BJ (cell line): ENCODE measurements at regions of chr10 and their contacts with region 1.

Region 1: DNA sequence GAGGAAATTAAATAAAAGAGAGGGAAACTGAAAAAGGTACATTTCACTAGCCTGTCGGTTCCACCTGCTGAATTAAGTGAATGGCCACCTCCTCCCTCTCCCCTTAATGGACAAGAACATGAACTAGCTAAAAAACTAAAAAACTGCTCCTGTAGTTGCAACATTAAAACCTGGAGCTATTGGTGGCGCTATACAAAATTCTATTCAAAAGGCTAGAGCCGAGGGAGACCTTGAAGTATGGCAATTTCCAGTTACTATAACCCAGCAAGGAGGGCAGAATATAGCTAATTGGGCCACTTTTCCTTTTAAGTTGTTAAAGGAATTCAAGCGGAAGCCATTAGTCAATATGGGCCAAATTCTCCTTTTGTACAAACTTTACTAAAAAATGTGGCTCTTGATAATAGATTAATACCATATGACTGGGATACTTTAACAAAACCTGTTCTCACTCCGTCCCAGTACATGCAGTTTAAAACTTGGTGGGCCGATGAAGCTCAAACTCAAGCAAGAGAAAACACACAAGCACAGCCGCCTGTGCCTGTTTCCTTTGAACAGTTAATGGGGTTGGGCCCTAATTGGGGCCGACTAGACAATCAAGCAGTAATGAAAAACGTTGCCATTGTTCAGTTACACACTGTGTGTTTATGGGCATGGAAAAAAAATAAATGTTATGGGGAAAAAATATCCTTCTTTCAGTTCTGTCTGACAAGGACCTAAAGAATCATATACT is 6.5 kb upstream of the CHST3 start:
- DNase-seq: no peak
- H3K4me3 ChIP-seq: no peak overlapping the region
- H3K27me3 ChIP-seq: no peaks in the 10 kb centered on the region
- CTCF ChIP-seq: peak; percentile 40

Region 2: DNA sequence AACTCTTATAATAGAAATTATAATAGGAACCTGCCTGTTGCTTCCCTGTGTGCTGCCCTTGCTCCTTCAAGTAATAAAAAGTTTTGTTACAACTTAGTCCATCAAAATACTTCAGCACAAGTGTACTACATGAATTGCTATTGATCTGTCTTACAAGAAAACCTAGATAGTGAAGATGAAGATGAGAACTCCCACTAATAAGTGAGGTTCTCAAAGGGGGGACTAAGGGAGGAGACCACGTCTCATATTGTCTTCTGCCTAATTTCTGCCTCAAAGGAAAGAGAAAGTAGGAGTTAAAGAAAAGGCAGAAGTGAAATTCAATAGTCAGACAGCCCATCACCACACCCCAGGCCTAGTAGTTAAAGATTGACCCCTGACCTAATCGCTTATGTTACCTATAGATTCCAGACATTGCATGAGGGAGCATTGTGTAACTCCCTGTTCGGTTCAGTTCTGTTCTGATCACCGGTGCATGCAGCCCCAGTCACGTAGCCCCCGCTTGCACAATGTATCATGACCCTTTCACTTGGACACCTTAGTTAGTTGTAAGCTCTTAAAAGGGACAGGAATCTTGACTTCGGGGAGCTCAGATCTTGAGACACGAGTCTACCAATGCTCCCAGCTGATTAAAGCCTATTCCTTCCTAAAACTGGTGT is 11.8 kb before region 1 on chr10:
- CTCF ChIA-PET with region 1: interaction called, 14 read pairs
- POLR2A ChIA-PET with region 1: no interaction called
- DNase-seq: no peak
- H3K4me3 ChIP-seq: no peak overlapping the region
- H3K27me3 ChIP-seq: peaks cover 4% of the 10 kb centered on the region
- CTCF ChIP-seq: no peak

Region 3: GRCh38 chr10:71999360-72000072 is 41.8 kb after region 1 on chr10:
- CTCF ChIA-PET with region 1: interaction called, 11 read pairs
- POLR2A ChIA-PET with region 1: no interaction called
- DNase-seq: peak; percentile 62
- H3K4me3 ChIP-seq: no peak overlapping the region; the same call in 1 of the 2 replicates
- H3K27me3 ChIP-seq: no peaks in the 10 kb centered on the region
- CTCF ChIP-seq: no peak

Region 4: DNA sequence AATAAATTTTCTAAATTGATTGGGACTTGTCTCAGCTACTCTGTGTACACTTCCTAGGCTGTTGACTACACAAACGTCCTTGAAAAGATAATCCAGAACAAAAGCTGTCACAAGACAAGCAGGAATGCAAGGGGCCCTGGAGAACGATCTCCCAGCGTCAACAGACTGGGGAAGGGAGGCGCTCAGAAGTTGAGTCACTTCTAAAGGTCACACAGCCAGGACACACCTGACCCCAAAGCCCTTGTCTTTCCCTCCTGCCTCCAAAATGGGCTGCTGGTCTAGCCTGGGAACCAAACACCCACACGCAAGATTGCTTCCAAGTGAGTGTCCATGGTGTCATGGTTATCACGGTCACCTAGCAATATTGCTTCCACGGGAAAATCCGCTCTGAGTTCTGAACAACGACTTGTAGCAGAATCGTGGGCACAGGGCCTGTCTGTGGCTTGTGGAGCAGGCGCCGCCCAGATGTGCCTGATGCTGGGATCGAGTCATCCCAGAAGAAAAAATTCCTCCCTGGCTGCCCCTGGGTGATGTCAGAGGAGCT is 80.8 kb after region 1 on chr10:
- CTCF ChIA-PET with region 1: interaction called, 59 read pairs
- POLR2A ChIA-PET with region 1: no interaction called
- DNase-seq: peak; percentile 38
- H3K4me3 ChIP-seq: no peak overlapping the region
- H3K27me3 ChIP-seq: no peaks in the 10 kb centered on the region
- CTCF ChIP-seq: no peak

Region 5: GRCh38 chr10:72146071-72146470 is 188.4 kb after region 1 on chr10:
- CTCF ChIA-PET with region 1: no interaction called
- POLR2A ChIA-PET with region 1: no interaction called
- DNase-seq: no peak
- H3K4me3 ChIP-seq: no peak overlapping the region
- H3K27me3 ChIP-seq: no peaks in the 10 kb centered on the region
- CTCF ChIP-seq: no peak